ENCODE measurements at regions of chr20 and their contacts with region 1.

Region 1: DNA sequence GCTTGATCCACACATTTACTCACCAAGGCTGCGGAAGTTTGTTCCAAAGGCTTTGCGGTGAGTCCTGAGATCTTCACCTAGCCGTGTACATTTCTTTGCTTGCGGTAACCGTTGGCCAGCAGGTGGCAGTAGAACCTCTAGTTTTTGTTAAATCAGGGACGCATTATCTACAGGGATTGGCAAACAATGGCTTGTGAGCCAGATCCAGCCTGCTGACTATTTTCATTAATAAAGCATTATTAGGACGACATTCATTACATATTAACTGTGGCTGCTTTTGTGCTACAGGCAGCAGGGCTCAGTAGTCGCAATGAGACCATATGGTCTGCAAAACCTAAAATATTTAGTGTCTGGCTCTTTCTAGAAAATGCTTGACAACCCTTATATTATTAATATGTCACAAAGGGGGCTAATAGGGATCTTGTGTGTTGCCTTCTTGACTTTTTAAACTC is 174.1 kb downstream of the DOK5 start:
- DNase-seq: peak; percentile 56
- CTCF ChIP-seq: peak; percentile 86

Region 2: GRCh38 chr20:53570521-53571357 is 1078.8 kb before region 1 on chr20:
- in situ Hi-C with region 1: loop called (anchors 25 kb)
- DNase-seq: no peak
- CTCF ChIP-seq: no peak

Region 3: DNA sequence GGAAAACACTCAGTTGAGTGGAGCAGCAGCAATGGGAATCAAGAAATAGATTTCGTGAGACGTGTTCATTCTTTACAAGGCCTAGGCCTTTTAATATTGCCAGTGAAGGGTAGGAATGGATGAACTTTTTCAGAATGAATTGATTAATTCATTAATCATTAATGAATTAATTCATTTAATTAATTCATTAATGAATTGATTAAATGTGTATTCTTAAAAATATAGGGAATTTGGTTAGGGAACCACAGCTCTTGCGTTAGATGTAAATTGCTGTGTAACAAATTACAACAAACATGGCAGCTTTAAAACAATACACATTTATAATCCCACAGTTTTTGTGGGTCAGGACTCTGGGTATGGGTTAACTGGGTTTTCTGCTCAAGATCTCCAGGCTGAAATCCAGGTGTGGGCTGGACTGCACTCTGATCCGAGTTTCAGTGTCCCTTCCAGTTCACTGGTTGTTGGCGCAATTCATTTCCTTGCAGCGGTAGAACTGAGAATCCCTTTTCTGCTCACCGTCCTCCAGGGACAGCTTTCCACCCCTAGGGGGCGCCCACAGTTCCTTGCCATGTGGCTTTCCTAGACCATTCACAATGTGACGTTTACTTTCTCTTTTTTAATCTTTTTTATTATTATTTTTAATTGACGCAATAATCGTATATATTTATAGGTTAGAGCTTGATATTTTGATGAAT is 546.3 kb before region 1 on chr20:
- in situ Hi-C with region 1: loop called (anchors 25 kb)
- DNase-seq: peak; percentile 55
- CTCF ChIP-seq: peak; percentile 91

Region 4: GRCh38 chr20:54219751-54220426 is 429.6 kb before region 1 on chr20:
- in situ Hi-C with region 1: loop called (anchors 10 kb)
- DNase-seq: no peak
- CTCF ChIP-seq: peak; percentile 38

Region 5: DNA sequence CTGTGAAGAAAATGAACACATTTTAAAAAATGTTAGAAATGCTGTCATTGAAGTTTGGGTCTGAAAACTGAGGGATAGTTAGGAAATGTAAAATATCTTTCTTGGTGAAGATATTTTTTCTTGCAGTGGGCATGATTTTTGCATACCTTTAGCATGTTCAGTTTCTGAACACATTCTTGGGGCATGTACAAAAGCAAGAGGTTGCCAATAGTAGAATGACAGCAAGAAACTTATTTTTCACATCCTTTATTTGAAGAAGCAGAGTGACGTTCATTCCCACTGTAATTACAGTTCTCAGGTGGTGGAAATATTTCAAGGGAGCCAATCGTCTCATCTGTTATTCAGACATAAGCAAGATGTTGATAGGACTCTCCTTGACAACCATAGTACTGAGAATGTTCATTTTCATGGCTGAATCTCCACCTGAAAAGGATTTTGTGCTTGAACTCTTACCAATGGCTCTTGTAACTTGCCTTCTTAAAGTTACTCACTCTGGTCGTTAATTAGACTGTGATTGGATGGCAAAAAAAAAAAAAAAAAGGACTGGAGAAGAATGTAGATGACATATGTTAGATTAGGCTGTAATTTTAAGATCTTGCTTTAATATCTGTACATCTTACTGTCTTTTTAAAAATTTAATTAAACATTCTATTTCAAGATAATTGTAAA is 99.7 kb before region 1 on chr20:
- in situ Hi-C with region 1: no loop called
- DNase-seq: no peak
- CTCF ChIP-seq: no peak

Region 6: DNA sequence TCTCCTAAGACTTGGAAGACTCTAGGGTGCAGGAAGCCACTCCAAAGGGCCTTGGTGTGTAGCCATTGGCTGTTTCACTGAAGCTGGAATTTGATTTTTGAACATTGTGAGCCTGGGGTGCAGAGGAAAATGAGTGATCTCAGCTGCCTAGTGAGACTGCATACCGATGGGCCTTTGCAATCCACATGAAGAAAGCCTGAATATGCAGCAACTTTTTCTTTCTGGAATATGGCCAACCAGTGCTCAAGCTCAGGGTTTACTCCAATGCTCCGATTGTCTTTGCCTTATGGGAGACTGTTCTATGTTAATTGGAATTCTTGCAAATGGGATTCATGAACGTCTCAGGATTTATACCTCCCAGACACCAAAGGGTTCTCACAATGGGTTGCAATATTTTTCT is 68.5 kb after region 1 on chr20:
- in situ Hi-C with region 1: no loop called
- DNase-seq: no peak
- CTCF ChIP-seq: no peak

Measured in GM13977 (cell line).